MCF 10A (cell line): ENCODE measurements at regions of chr21 and their contacts with region 1.

Region 1: DNA sequence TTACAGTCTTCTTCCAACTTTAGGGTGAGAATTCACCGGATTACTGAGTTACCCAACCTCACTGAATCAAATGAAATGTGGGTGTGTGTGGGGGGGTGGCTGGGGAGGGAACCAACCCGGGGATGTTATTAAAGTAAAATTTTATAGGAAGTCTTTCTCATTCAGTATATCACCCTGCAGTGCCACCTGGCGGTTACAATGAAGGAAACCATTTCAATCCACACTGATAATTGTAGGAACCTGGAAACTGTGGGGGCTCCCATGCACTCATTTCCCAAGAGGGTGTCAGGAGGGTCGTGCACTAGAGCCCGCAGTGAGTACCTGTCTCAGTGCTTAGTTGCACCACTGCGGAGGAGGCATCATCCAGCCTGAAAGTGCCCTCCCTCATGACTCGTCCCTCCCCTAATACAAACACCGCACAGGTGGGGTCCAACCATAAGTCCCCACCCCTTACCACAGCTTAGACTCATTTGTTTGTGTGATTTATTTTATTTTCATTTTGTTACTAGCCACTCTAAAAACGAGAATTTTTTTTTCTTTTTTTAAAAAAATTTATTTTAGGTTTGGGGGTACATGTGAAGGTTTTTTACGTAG is 29.1 kb upstream of the IGSF5 start:
- DNase-seq: peak; percentile 39
- H3K4me3 Mint-ChIP-seq: no peak overlapping the region
- H3K27ac Mint-ChIP-seq: no peak overlapping the region
- H3K4me1 Mint-ChIP-seq: peaks cover 6% of the 10 kb centered on the region
- H3K27me3 Mint-ChIP-seq: peaks cover 32% of the 10 kb centered on the region
- CTCF ChIP-seq: peak; percentile 63

Region 2: DNA sequence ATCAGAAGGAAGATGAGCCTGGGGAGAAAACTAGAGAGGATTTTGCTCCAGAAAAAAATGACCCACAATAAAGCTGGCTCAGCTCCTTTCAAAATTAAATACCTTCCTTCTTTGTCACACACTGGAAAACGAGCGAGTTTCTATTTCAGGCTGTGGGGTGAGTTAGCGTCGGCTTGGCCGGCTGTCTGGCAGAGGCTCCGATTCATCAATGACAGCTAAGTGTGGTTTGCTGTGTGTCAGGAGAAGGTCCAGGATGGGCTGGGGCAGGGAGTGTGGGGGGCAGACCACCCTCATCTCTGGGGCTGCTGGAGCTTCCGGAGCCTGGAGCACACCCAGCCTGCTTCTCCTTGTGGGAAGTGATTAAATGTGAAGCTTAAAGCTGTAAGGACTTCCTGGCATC is 790.0 kb before region 1 on chr21:
- CTCF ChIA-PET with region 1: no interaction called
- POLR2A ChIA-PET with region 1: no interaction called
- intact Hi-C with region 1: no loop called
- DNase-seq: peak; percentile 79
- H3K4me3 Mint-ChIP-seq: no peak overlapping the region
- H3K27ac Mint-ChIP-seq: peak overlapping the region; percentile 76
- H3K4me1 Mint-ChIP-seq: peaks cover 18% of the 10 kb centered on the region
- H3K27me3 Mint-ChIP-seq: no peaks in the 10 kb centered on the region
- CTCF ChIP-seq: no peak

Region 3: GRCh38 chr21:39518138-39518846 is 197.6 kb before region 1 on chr21:
- CTCF ChIA-PET with region 1: interaction called, 224 read pairs
- POLR2A ChIA-PET with region 1: interaction called, 3 read pairs
- intact Hi-C with region 1: loop called (anchors 1 kb)
- DNase-seq: peak; percentile 61
- H3K4me3 Mint-ChIP-seq: no peak overlapping the region
- H3K27ac Mint-ChIP-seq: peak overlapping the region; percentile 76
- H3K4me1 Mint-ChIP-seq: peaks cover 16% of the 10 kb centered on the region
- H3K27me3 Mint-ChIP-seq: no peaks in the 10 kb centered on the region
- CTCF ChIP-seq: peak; percentile 91

Region 4: DNA sequence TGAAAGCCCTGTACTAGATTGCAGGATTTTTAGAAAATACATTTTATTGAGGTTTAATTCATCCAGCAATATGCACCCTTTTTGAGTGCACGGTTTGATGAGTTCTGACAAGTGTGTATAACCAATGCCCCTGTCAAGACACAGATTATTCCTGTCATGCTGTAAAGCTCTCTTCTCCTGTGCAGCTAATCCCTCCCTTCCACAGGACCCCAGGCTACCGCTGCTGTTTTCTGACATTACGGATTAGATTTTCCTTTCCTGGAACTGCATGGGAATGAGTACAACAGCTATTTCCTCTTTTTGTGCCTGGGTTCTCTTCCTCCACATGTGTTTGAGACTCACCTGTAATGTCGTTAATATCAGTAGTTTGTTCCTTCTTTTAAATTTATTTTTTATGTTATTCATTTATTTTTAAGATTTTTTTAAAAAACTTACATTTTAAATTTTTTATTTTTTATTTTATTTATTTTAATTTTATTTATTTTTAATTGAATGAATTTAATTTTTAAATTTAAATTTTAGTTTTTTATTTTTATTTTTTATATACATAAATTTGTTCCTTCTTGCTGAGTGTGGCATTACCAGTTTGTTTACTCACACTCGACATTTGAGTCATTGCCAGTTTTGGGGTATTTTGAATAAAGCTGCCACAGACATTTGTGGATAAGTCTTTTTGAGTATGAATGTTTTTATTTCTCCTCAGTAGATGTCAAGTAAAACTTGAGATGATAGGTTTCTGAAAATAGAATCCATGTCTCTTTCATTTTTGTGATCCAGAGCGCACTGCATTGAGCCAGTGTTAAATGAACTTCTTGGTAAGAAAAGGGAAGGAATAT is 182.1 kb before region 1 on chr21:
- CTCF ChIA-PET with region 1: interaction called, 11 read pairs
- POLR2A ChIA-PET with region 1: no interaction called
- intact Hi-C with region 1: no loop called
- DNase-seq: no peak
- H3K4me3 Mint-ChIP-seq: no peak overlapping the region
- H3K27ac Mint-ChIP-seq: no peak overlapping the region
- H3K4me1 Mint-ChIP-seq: no peaks in the 10 kb centered on the region
- H3K27me3 Mint-ChIP-seq: no peaks in the 10 kb centered on the region
- CTCF ChIP-seq: no peak

Region 5: GRCh38 chr21:39633770-39634181 is 82.1 kb before region 1 on chr21:
- CTCF ChIA-PET with region 1: interaction called, 4 read pairs
- POLR2A ChIA-PET with region 1: no interaction called
- intact Hi-C with region 1: loop called (anchors 5 kb)
- DNase-seq: peak; percentile 51
- H3K4me3 Mint-ChIP-seq: peak overlapping the region; percentile 17
- H3K27ac Mint-ChIP-seq: peak overlapping the region; percentile 80
- H3K4me1 Mint-ChIP-seq: peaks cover 43% of the 10 kb centered on the region
- H3K27me3 Mint-ChIP-seq: no peaks in the 10 kb centered on the region
- CTCF ChIP-seq: no peak

Region 6: GRCh38 chr21:39728341-39728740 is 12.4 kb after region 1 on chr21:
- CTCF ChIA-PET with region 1: interaction called, 18 read pairs
- POLR2A ChIA-PET with region 1: no interaction called
- intact Hi-C with region 1: no loop called
- DNase-seq: no peak
- H3K4me3 Mint-ChIP-seq: no peak overlapping the region
- H3K27ac Mint-ChIP-seq: no peak overlapping the region
- H3K4me1 Mint-ChIP-seq: peaks cover 21% of the 10 kb centered on the region
- H3K27me3 Mint-ChIP-seq: no peaks in the 10 kb centered on the region
- CTCF ChIP-seq: no peak